CD4-positive, alpha-beta T cell (primary cell): ENCODE measurements at regions of chr16 and their contacts with region 1.

Region 1: DNA sequence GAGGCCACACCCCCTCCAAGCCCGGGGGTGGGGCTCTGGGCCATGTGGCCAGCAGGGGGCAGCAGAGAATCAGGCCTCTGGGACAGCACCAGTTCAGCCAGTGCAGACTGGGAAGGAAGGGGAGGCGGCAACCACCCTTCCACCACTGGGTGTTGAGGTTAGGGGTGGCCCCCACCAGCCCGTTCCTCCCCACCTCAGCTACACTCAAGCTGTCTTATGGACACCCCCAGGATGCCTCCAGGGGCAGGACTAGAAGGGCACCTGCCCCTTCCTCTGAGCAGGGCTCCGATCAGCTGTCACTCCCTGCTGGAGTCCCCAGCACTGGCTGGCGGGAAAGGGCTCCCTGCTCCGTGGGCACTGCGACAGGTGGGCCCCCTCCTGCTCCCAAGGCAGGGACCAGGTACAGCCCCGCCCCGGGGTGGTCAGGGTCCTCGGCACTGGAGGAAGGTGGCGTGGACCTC is 21.8 kb downstream of the KATNB1 start:
- DNase-seq: peak; percentile 79 to 93 (median 88)
- ATAC-seq: peak; percentile 98
- H3K4me3 ChIP-seq: no peak overlapping the region
- H3K4me3 Mint-ChIP-seq: no peak overlapping the region
- H3K27ac ChIP-seq: no peak overlapping the region
- H3K27ac Mint-ChIP-seq: no peak overlapping the region
- H3K4me1 ChIP-seq: peaks cover 15% of the 10 kb centered on the region
- H3K4me1 Mint-ChIP-seq: no peaks in the 10 kb centered on the region
- H3K27me3 ChIP-seq: no peaks in the 10 kb centered on the region
- H3K27me3 Mint-ChIP-seq: no peaks in the 10 kb centered on the region
- CTCF ChIP-seq: peak; percentile 89

Region 2: GRCh38 chr16:57628008-57628781 is 129.2 kb before region 1 on chr16 and contains the start of gene ADGRG1:
- CTCF ChIA-PET with region 1: no interaction called
- POLR2A ChIA-PET with region 1: no interaction called
- intact Hi-C with region 1: no loop called
- DNase-seq: peak in 5 of 14 experiments; percentile 22 to 70 (median 56)
- ATAC-seq: peak; percentile 68
- H3K4me3 ChIP-seq: peak within 1 kb of the TSS; percentile 30
- H3K4me3 Mint-ChIP-seq: no peak within 1 kb of the TSS
- H3K27ac ChIP-seq: no peak within 1 kb of the TSS
- H3K27ac Mint-ChIP-seq: no peak within 1 kb of the TSS
- H3K4me1 ChIP-seq: peaks cover 18% of the 10 kb centered on the region
- H3K4me1 Mint-ChIP-seq: peaks cover 8% of the 10 kb centered on the region
- H3K27me3 ChIP-seq: peaks cover 17 to 25% of the 10 kb centered on the region in 2 experiments
- H3K27me3 Mint-ChIP-seq: peaks cover 32% of the 10 kb centered on the region
- CTCF ChIP-seq: no peak
- total RNA-seq, gene ADGRG1: 1.8 to 2.3 TPM

Region 3: DNA sequence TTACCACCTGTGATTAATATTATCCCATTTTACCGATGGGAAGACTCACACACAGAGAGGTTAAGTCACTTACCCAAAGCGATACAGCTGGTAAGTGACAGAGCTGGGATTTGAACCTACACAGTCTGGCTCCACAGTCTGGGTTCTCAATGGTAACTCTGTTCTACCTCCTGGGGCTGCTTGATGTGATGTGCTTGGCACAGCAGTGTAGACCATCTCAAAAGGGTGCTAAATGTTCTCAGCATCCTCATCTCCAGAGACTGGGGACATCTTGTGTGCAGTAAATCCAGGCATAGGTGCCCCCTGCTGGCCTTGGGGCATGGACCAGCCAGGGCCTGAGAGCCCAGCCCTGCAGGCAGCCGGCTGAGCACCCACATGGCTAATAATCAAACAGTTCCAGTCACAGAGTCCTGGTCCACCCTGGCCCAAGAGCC is 37.2 kb before region 1 on chr16:
- CTCF ChIA-PET with region 1: no interaction called
- POLR2A ChIA-PET with region 1: no interaction called
- intact Hi-C with region 1: no loop called
- DNase-seq: peak in 8 of 14 experiments; percentile 9 to 60 (median 35)
- ATAC-seq: peak; percentile 55
- H3K4me3 ChIP-seq: no peak overlapping the region
- H3K4me3 Mint-ChIP-seq: no peak overlapping the region
- H3K27ac ChIP-seq: no peak overlapping the region
- H3K27ac Mint-ChIP-seq: no peak overlapping the region
- H3K4me1 ChIP-seq: no peaks in the 10 kb centered on the region
- H3K4me1 Mint-ChIP-seq: no peaks in the 10 kb centered on the region
- H3K27me3 ChIP-seq: no peaks in the 10 kb centered on the region
- H3K27me3 Mint-ChIP-seq: no peaks in the 10 kb centered on the region
- CTCF ChIP-seq: no peak

Region 4: DNA sequence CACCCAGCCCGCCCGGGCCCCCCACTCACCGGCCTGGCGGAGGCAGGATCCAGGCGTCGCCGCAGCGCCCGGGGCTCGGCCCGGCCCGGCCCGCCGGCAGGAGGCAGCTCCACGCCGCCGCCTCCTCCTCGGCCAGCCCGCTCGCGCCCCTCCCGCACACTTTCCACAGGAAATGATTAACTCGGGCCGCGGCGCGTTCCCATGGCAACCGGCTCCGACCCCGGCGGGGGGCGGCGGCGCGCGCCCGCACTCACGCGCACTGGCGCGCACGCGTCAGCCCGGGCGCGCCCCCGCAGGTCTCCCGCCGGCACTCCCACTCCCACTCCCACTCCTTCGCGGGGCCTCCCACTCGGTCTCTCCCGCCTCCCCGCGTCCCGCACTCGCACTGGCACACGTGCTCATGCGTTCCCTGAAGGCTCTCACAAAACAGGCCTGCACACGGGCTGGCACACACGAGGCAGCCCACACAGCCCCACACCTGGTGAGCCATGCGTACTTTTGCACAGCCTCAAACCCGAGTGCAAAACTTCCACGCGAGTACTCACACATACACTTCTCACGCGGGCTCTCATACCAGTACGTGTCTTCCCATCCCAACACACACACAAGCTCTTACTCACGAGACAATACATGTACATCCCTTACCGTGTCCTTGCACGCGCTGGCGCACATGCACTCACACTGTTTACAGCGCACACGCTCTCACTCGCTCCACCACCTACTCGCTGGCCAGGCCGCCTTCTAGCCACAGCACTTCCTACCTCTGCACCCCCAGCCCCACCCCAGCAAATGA is 45.2 kb after region 1 on chr16 and contains the start of gene KIFC3:
- CTCF ChIA-PET with region 1: no interaction called
- POLR2A ChIA-PET with region 1: no interaction called
- intact Hi-C with region 1: no loop called
- DNase-seq: peak; percentile 15 to 82 (median 56)
- ATAC-seq: peak; percentile 61
- H3K4me3 ChIP-seq: peak within 1 kb of the TSS; percentile 37
- H3K4me3 Mint-ChIP-seq: peak within 1 kb of the TSS; percentile 86
- H3K27ac ChIP-seq: no peak within 1 kb of the TSS
- H3K27ac Mint-ChIP-seq: no peak within 1 kb of the TSS
- H3K4me1 ChIP-seq: peaks cover 36% of the 10 kb centered on the region
- H3K4me1 Mint-ChIP-seq: peaks cover 37% of the 10 kb centered on the region
- H3K27me3 ChIP-seq: peaks cover 10 to 16% of the 10 kb centered on the region in 2 experiments
- H3K27me3 Mint-ChIP-seq: peaks cover 38% of the 10 kb centered on the region
- CTCF ChIP-seq: no peak
- total RNA-seq, gene KIFC3: not detected

Region 5: DNA sequence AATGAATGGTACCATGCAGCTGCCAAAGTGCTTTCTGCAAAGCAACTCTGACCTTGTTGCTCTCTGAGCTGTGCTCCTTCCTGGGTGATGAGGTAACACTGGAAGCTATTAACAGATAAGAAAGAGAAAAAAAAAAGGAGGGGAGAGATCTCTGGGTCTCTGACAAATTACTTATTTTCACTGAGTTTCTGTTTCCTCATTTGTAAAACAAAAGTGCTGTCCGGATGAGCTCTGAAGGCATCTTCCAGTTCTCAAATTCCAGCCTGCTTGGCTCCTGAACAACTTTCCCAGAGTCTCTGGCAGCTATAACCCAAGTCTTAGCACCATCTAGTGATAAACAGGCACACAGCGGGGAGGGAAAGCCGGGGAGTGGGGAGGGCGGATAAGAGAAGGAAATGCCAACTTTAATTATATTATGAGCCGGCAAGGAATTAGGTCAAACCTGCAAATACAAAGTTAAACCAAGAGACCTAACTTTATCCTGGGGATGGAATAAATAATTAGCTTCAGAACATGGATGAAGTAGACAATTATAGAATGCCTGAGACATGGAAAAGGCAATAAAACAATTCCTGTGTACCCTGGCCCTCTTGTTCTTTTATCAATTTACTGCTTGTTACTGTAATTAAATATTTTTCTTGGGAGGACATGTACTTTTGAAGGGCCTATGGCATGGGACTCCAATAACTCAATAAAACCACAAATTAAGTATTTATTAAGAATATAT is 106.2 kb after region 1 on chr16:
- CTCF ChIA-PET with region 1: no interaction called
- POLR2A ChIA-PET with region 1: no interaction called
- intact Hi-C with region 1: loop called in 1 of 2 experiments (anchors 10 kb)
- DNase-seq: peak in 4 of 14 experiments; percentile 8 to 24 (median 9)
- ATAC-seq: no peak
- H3K4me3 ChIP-seq: no peak overlapping the region
- H3K4me3 Mint-ChIP-seq: no peak overlapping the region
- H3K27ac ChIP-seq: no peak overlapping the region
- H3K27ac Mint-ChIP-seq: no peak overlapping the region
- H3K4me1 ChIP-seq: no peaks in the 10 kb centered on the region
- H3K4me1 Mint-ChIP-seq: no peaks in the 10 kb centered on the region
- H3K27me3 ChIP-seq: peaks cover 0 to 11% of the 10 kb centered on the region in 2 experiments
- H3K27me3 Mint-ChIP-seq: peaks cover 32% of the 10 kb centered on the region
- CTCF ChIP-seq: no peak